Activated CD4-positive, alpha-beta T cell treated with anti-CD3 and anti-CD28 coated beads, Interleukin-2, amount 10 ng/mL, durations not matched to agents 24 days and 14 days (primary cell): ENCODE measurements at regions of chr12 and their contacts with region 1.

Region 1: DNA sequence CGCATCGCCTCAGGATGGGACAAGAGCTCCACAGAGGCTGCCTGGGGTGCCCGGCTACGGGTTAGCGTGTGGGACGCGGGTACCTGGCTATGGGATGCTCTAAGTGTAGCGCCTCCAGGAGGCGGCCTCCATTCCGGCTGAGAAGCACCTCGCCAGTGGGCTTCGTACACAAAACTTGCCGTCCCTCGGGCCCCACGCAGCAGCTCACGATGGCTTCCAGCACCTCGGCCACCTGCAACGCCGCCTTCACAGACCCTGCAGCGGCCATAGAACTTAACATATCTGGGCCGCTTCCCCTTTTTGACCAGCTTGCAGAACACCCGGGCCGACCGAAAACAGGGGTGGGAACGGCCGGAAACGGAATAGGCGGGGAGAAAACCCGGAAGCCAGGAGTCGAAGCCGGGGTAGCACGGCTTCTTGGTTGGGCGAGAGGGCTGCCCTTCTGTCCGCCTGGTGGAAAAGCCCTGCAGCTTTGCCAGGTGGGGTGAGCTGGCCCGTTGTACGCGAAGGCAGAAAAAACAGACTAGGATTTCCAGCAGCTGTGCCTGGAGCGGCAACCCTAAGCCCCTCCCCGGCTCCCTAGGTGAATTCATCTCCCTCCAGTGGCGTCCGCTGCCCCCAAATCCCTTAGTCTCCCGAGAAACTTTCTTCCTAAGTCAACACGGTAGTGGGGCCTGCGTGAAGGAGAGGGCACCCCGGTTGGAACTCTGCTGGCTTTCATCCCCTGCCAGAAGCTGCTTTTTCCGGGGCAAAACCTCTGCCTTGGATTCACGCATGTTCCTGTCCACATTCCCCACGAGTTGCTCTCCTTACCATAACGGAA is at the start of gene BBS10:
- DNase-seq: peak; percentile 96
- H3K4me3 Mint-ChIP-seq: peak within 1 kb of the TSS; percentile 97
- H3K27ac Mint-ChIP-seq: peak within 1 kb of the TSS; percentile 88
- H3K4me1 Mint-ChIP-seq: peaks cover 23% of the 10 kb centered on the region
- H3K27me3 Mint-ChIP-seq: no peaks in the 10 kb centered on the region
- total RNA-seq, gene BBS10: 3.8 and 4.7 TPM in 2 replicates

Region 2: GRCh38 chr12:75511116-75512048 is 836.9 kb before region 1 on chr12 and contains the start of gene KRR1:
- intact Hi-C with region 1: loop called (anchors 1 kb)
- DNase-seq: peak; percentile 97
- H3K4me3 Mint-ChIP-seq: peak within 1 kb of the TSS; percentile 98
- H3K27ac Mint-ChIP-seq: peak within 1 kb of the TSS; percentile 100
- H3K4me1 Mint-ChIP-seq: peaks cover 31% of the 10 kb centered on the region
- H3K27me3 Mint-ChIP-seq: peaks cover 3% of the 10 kb centered on the region
- total RNA-seq, gene KRR1: 134 and 141 TPM in 2 replicates

Region 3: DNA sequence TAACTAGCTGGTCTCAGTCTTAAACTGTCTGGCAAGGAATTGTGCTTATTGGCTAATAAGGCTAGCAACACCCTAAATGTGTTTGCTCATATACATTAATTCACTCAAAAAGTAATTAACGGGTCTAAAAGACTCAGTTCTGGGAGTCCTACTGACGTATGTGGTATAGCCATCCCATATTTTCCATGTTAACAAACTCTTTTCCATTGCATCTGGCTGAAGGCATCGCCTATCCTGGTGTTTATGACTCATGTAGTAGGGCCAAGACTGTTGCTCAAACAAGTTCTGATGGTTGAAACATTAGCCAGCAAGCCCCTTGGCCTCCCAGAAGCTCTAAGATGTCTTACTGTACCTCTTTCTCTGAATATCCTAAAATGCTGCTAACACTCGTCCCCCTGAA is 415.2 kb before region 1 on chr12:
- intact Hi-C with region 1: loop called (anchors 10 kb)
- DNase-seq: no peak
- H3K4me3 Mint-ChIP-seq: no peak overlapping the region
- H3K27ac Mint-ChIP-seq: no peak overlapping the region
- H3K4me1 Mint-ChIP-seq: peaks cover 45% of the 10 kb centered on the region
- H3K27me3 Mint-ChIP-seq: no peaks in the 10 kb centered on the region

Region 4: DNA sequence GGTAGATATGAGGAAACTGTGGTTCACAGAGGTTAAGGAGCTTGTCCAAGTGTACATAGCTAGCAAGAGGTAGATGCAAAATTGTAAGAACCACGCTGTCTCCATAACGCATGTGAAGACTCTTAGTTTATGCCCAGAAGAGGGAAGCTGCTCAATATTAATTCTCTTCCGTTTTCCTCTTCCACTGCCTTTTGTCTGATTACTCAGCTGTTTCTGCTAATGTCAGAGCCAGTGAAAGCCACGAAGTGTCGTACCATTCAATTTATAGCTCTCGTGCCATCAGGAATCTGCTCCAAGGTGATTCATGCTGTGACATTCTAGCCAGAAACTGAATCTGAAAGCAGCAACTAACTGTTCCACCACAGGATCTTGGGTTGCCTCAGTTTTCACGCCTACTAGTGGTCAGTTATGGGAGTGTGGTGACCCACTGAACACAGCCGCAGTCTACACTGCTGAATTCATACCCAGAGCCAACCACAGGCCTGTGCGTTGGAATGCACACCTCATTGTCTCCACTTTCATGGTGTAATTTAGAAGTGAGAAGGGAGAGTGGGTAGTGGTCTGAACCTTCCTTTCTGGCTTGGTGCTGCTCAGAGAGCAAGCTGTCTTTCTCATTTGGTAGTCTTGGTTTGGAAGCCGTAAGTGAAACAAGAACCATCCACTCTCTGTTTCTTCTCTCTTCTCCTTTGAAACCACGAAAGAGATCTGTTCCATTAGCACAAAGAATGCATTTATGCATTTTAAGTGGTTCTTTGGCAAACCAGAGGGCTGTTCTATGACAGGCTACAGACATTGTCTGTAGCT is 189.6 kb before region 1 on chr12:
- intact Hi-C with region 1: loop called (anchors 1 kb)
- DNase-seq: peak; percentile 91
- H3K4me3 Mint-ChIP-seq: peak overlapping the region; percentile 6
- H3K27ac Mint-ChIP-seq: peak overlapping the region; percentile 84
- H3K4me1 Mint-ChIP-seq: peaks cover 16% of the 10 kb centered on the region
- H3K27me3 Mint-ChIP-seq: peaks cover 30% of the 10 kb centered on the region

Region 5: DNA sequence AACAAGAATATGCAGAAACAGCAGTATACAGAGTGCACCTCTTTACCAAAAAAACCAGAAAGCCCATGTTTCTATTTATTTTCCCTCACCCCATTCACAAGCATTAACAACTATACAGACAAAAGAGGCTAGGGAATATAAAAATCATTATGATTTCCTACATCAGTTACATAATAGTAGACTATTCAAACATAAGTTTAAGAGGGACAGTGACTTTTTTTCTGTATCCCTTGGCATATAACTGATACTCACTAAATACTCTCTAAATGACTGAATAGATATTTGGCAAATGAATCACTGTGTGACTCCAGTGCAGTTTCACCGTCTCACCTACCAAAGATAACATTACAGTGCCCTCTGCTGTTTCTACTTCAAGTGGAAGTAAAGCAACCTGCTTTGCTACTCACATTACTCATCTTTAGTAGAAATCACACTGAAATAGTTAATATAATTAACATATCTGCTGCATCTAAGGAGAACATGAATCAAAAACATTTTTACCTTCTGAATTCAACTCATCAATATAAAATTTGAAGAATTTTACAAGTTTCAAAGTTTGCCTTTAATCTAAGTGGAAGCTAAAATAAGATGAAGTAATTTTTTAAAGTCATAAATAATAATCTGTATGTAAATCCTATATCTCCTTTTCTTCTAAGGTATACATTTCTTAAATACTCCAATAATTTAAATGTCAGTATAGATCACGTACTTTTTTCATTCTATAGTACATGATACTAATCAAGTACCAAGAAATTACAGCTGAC is 107.5 kb after region 1 on chr12:
- intact Hi-C with region 1: loop called (anchors 2 kb)
- DNase-seq: peak; percentile 73
- H3K4me3 Mint-ChIP-seq: no peak overlapping the region
- H3K27ac Mint-ChIP-seq: no peak overlapping the region
- H3K4me1 Mint-ChIP-seq: peaks cover 14% of the 10 kb centered on the region
- H3K27me3 Mint-ChIP-seq: no peaks in the 10 kb centered on the region

Region 6: DNA sequence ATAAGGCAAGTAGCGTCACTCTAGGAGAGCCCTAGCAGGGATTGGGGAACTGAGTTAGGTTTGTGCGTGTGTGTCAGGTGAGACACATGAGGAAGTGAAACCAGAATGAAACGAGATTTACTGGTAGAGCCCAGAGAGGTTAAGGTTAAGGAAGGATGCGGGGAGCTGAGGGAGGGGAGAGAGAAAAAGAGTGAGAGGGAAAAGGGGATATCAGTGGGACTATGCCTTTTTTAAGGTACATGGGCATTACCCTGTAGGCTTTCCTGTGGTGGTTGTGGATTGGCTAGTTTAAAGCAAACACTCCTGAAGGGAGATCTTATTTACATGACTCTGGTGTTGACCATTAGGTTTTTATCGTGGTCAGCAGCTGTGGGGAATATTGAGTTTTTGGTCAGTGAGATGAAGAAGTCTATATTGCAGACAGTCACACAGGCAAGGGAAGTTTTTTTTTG is 429.5 kb after region 1 on chr12:
- intact Hi-C with region 1: loop called (anchors 10 kb)
- DNase-seq: no peak
- H3K4me3 Mint-ChIP-seq: peak overlapping the region; percentile 10
- H3K27ac Mint-ChIP-seq: no peak overlapping the region
- H3K4me1 Mint-ChIP-seq: peaks cover 22% of the 10 kb centered on the region
- H3K27me3 Mint-ChIP-seq: no peaks in the 10 kb centered on the region